Right cardiac atrium (tissue), 5 donors: ENCODE measurements at regions of chr1 and their contacts with region 1.

Region 1: DNA sequence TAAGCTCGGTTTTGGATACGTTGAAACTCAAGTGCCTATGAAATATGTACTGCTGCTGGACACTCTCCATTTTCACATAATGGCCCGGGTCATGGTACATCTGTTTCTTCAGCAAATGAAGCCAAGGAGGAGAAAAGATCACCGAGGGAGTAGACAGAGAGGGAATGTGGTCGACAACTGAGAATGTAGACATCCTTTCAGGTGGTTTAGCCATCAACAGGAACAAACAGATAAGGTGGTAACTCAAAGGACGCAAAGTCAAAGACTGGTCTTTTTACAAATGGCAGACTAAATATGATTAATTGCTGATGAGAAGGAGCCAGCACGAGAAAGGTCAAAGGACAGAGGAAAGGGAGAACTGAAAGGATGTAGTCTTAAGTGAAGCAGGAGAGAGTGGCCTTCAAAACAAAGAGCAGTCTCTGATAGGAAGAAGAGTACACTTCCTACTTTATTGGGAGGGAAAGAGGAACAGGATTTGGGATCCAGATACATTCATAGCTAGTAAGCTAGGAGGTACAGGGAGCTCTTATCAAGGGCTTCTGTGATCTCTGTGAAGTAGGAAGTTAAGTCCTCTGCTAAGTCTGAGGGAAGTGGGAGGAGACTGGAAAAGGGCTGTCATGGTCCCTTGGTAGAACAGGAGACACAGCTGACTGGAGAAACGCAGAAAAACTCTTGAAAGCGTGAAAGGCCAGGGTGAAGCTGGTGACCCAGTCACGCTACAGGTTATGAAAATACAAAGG is 28.3 kb downstream of the NUP133 start:
- DNase-seq: no peak
- ATAC-seq: peak in 1 of 2 donors; percentile 86
- H3K4me3 ChIP-seq: no peak overlapping the region
- H3K27ac ChIP-seq: no peak overlapping the region
- H3K4me1 ChIP-seq: peaks cover 1% of the 10 kb centered on the region
- H3K27me3 ChIP-seq: no peaks in the 10 kb centered on the region

Region 2: GRCh38 chr1:229227298-229227919 is 252.4 kb before region 1 on chr1:
- intact Hi-C with region 1: no loop called
- DNase-seq: peak; percentile 84 to 92 (median 91)
- ATAC-seq: peak; percentile 18 to 50
- H3K4me3 ChIP-seq: no peak overlapping the region
- H3K27ac ChIP-seq: no peak overlapping the region
- H3K4me1 ChIP-seq: peaks cover 7% of the 10 kb centered on the region
- H3K27me3 ChIP-seq: no peaks in the 10 kb centered on the region

Region 3: GRCh38 chr1:229258031-229258756 is 221.6 kb before region 1 on chr1:
- intact Hi-C with region 1: loop called (anchors 2 to 5 kb)
- DNase-seq: peak in 2 of 3 donors; percentile 39 to 72
- ATAC-seq: peak; percentile 87 to 89
- H3K4me3 ChIP-seq: no peak overlapping the region
- H3K27ac ChIP-seq: no peak overlapping the region
- H3K4me1 ChIP-seq: no peaks in the 10 kb centered on the region
- H3K27me3 ChIP-seq: no peaks in the 10 kb centered on the region

Region 4: GRCh38 chr1:229539863-229540506 is 60.2 kb after region 1 on chr1:
- intact Hi-C with region 1: no loop called
- DNase-seq: no peak
- ATAC-seq: no peak
- H3K4me3 ChIP-seq: no peak overlapping the region
- H3K27ac ChIP-seq: no peak overlapping the region
- H3K4me1 ChIP-seq: no peaks in the 10 kb centered on the region
- H3K27me3 ChIP-seq: no peaks in the 10 kb centered on the region